Prostate gland (tissue), 2 donors: ENCODE measurements at regions of chr5 and their contacts with region 1.

Region 1: DNA sequence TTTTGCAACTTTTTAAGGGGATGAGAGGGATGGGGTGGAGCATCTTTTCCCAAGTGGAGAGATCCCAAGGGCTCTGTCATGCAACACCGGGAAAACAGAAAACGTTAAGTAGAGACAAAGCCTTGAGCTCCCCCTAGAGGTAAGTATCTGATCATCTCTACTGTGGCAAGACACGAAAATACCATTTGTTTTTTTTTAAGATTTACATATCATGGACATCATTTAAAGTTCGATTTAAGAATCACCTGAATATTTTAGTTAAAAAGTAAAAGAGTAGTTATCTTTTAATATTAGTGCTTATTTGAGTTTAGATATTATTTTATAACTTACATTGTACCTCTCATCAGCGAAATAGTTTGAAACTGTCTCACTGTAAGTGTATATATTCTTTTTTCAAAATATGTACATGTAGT is 200.4 kb downstream of the LRRC70 start:
- DNase-seq: peak; percentile 22
- H3K4me3 ChIP-seq: no peak overlapping the region
- H3K27ac ChIP-seq: no peak overlapping the region
- H3K4me1 ChIP-seq: no peaks in the 10 kb centered on the region
- H3K27me3 ChIP-seq: no peaks in the 10 kb centered on the region
- CTCF ChIP-seq: peak in 3 of 4 experiments; percentile 62 to 69 (median 66)
- POLR2A ChIP-seq: no peak

Region 2: GRCh38 chr5:62460578-62460983 is 318.4 kb before region 1 on chr5:
- intact Hi-C with region 1: loop called (anchors 1 kb)
- DNase-seq: no peak
- H3K4me3 ChIP-seq: no peak overlapping the region
- H3K27ac ChIP-seq: no peak overlapping the region
- H3K4me1 ChIP-seq: no peaks in the 10 kb centered on the region
- H3K27me3 ChIP-seq: no peaks in the 10 kb centered on the region
- CTCF ChIP-seq: peak; percentile 19 to 69 (median 60)
- POLR2A ChIP-seq: no peak

Region 3: DNA sequence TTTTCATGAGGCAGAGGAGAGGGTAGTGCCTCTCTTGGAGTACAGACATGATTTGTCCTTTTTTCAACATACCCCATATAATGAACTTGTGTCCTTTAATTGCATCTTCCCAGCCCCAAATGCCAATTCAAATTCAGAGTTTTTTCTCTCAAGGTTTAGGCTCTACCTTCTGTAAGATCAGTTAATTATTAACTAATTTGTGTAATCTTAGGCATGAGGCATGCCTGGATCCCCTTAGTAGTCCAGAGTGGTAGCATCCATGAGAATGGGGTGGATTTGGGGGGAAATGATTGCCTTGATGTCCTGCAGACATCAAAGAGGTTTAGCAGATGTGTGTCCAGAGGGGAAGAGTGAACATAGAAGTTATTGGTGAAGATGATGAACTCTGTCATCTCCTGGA is 332.9 kb after region 1 on chr5:
- intact Hi-C with region 1: no loop called
- DNase-seq: no peak
- H3K4me3 ChIP-seq: no peak overlapping the region
- H3K27ac ChIP-seq: no peak overlapping the region
- H3K4me1 ChIP-seq: no peaks in the 10 kb centered on the region
- H3K27me3 ChIP-seq: no peaks in the 10 kb centered on the region
- CTCF ChIP-seq: no peak
- POLR2A ChIP-seq: no peak